ENCODE measurements at regions of chr18 and their contacts with region 1.

Region 1: DNA sequence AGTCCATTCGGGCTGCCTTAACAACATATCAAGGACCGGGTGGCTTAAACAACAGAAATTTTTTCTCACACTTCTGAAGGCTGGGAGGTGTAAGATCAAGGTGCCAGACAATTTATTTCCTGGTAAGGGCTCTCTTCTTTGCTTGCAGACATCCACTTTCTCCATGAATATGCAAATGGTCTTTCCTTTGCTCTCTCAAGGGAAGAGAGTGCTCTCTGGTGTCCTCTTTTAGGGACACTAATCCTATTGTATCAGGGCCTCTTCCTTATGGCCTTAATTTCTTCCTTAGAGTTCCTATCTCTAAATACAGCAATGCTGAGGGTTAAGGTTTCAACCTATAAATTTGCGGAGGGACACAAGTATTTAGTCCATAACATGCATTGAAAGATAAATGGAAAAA is 770.8 kb downstream of the DSC3 start:
- DNase-seq: peak; percentile 3
- H3K4me3 Mint-ChIP-seq: no peak overlapping the region
- H3K27ac Mint-ChIP-seq: no peak overlapping the region
- H3K4me1 Mint-ChIP-seq: no peaks in the 10 kb centered on the region
- H3K27me3 Mint-ChIP-seq: no peaks in the 10 kb centered on the region
- CTCF ChIP-seq: no peak

Region 2: GRCh38 chr18:28961669-28962228 is 1310.0 kb before region 1 on chr18:
- CTCF ChIA-PET with region 1: no interaction called
- intact Hi-C with region 1: loop called (anchors 10 kb)
- DNase-seq: peak; percentile 37
- H3K4me3 Mint-ChIP-seq: no peak overlapping the region
- H3K27ac Mint-ChIP-seq: no peak overlapping the region
- H3K4me1 Mint-ChIP-seq: no peaks in the 10 kb centered on the region
- H3K27me3 Mint-ChIP-seq: no peaks in the 10 kb centered on the region
- CTCF ChIP-seq: peak; percentile 42

Region 3: GRCh38 chr18:29626094-29626493 is 645.6 kb before region 1 on chr18:
- CTCF ChIA-PET with region 1: no interaction called
- intact Hi-C with region 1: no loop called
- DNase-seq: no peak
- H3K4me3 Mint-ChIP-seq: no peak overlapping the region
- H3K27ac Mint-ChIP-seq: no peak overlapping the region
- H3K4me1 Mint-ChIP-seq: no peaks in the 10 kb centered on the region
- H3K27me3 Mint-ChIP-seq: no peaks in the 10 kb centered on the region
- CTCF ChIP-seq: no peak

Region 4: DNA sequence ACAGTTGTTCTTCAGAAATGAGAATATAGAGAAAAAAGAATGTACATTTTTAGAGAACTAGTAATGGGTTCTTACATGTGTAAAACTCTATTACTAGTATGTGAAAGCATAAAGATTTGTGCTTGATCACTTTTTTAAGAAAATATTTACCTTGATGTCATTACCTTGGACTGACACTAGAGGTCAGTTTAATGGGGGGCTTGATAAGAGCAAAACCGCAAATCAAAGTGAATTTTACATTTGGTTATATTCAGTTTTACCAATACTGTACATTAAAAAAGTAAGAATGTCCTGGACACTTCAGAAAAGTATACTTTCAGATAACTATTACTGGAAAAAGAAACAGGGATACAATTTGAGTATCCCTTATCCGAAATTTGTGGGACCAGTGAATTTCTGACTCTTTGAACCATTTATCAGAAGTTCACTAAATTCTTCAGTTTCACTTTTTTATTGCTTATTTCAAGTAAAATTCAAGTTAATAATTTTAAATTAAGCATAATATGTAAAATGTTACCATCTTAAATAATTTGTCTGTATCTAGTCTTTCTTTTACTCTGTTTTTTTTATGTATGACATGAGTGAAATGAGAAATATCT is 378.7 kb before region 1 on chr18:
- CTCF ChIA-PET with region 1: no interaction called
- intact Hi-C with region 1: loop called (anchors 1 kb)
- DNase-seq: no peak
- H3K4me3 Mint-ChIP-seq: no peak overlapping the region
- H3K27ac Mint-ChIP-seq: no peak overlapping the region
- H3K4me1 Mint-ChIP-seq: no peaks in the 10 kb centered on the region
- H3K27me3 Mint-ChIP-seq: no peaks in the 10 kb centered on the region
- CTCF ChIP-seq: peak; percentile 79

Region 5: GRCh38 chr18:29979881-29980280 is 291.8 kb before region 1 on chr18:
- CTCF ChIA-PET with region 1: no interaction called
- intact Hi-C with region 1: no loop called
- DNase-seq: no peak
- H3K4me3 Mint-ChIP-seq: no peak overlapping the region
- H3K27ac Mint-ChIP-seq: no peak overlapping the region
- H3K4me1 Mint-ChIP-seq: no peaks in the 10 kb centered on the region
- H3K27me3 Mint-ChIP-seq: no peaks in the 10 kb centered on the region
- CTCF ChIP-seq: no peak

Region 6: DNA sequence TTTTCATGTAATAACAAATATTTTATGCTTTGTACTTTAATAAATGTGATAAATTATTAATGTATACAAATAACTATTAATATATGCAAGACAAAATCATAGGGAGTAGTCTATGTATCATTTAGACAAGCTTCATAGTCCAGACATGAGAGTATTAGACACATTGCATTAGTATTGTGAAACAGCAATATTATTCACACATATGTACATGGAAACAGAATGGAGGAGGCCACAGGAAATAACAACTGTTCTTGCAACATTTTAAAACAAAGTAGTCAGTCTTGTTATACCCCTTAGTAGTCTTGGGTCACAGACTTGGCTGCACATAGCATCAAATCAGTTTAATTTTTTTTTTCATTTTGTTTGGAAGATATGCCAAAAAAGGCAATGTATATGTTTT is 875.1 kb after region 1 on chr18:
- CTCF ChIA-PET with region 1: no interaction called
- intact Hi-C with region 1: no loop called
- DNase-seq: no peak
- H3K4me3 Mint-ChIP-seq: no peak overlapping the region
- H3K27ac Mint-ChIP-seq: no peak overlapping the region
- H3K4me1 Mint-ChIP-seq: no peaks in the 10 kb centered on the region
- H3K27me3 Mint-ChIP-seq: no peaks in the 10 kb centered on the region
- CTCF ChIP-seq: no peak